ENCODE measurements at regions of chr1 and their contacts with region 1.

Region 1: GRCh38 chr1:101136739-101137138 is 100.1 kb upstream of the S1PR1 start:
- DNase-seq: no peak
- ATAC-seq: no peak
- H3K4me3 ChIP-seq: no peak overlapping the region
- H3K27ac ChIP-seq: no peak overlapping the region
- H3K4me1 ChIP-seq: peaks cover 2% of the 10 kb centered on the region in 2 donors
- H3K27me3 ChIP-seq: no peaks in the 10 kb centered on the region

Region 2: DNA sequence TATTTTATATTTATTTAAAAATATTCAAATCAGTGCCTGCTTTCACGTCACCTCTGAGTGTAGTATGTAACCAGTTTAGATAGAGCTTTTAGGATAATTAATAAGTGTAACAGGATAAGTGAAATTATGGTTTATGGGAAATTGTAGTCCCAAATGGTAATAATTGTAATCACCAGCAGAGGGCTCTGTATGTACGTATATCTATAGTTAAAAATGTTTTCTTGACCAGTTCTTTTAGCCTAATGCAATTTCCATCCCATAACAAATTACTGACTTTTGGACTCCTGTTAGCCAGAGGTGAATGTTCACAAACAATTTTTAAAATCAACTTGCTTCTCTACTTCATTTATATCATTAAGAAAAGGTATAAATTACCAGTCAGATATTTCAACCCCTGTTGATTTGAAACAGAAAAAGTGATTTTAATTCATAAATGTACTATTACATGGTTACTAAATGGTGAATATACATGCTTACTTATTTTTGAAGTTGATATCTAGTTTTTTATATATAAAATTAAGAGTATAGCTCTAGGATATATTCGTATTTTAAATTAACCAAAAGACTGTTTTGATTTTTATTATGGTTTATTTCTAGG is 215.5 kb before region 1 on chr1:
- intact Hi-C with region 1: loop called in 1 of 2 experiments (anchors 5 kb)
- DNase-seq: no peak
- ATAC-seq: no peak
- H3K4me3 ChIP-seq: no peak overlapping the region
- H3K27ac ChIP-seq: no peak overlapping the region
- H3K4me1 ChIP-seq: no peaks in the 10 kb centered on the region
- H3K27me3 ChIP-seq: no peaks in the 10 kb centered on the region